Caco-2 (cell line): ENCODE measurements at regions of chr3 and their contacts with region 1.

Region 1: DNA sequence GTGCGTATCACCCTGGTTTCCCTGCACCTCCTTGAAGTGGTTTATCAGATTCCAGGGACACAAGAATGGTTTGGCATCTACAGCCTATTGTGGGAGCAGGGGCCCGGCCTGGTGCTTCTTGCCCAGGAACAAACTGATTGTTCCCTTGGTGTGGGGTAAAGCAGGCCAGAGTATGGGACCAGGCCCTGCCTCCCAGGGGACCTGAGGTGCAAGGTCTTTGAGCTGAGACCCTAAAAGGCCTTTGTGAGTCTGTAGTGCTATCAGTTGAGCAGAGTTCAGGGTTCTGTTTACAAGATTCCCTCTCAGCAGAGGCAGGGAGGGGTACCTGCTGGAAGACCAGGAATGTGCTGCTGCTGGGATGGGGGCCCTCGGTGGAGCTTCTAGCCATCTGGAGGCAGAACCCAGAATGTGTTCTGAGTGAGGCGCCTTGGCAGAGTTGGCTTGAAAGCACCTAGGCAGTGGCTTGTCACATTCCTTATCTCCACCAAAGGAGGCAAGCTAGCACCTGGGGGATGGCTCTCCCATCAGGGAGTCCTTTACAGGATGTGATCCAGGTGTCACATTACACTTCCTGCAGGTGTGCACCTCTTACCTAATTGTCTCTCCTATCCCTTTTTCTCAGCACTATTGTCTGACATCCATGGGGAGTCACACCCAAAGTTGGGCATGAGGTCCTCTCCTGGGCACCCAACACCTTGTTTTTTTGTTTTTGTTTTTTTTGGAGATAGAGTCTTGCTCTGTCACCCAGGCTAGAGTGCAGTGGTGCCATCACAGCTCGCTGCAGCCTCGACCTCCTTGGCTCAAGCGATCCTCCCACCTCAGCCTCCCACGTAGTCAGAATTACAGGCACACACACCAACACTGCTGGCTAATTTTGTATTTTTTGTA is 13.1 kb downstream of the FLNB start:
- DNase-seq: peak; percentile 56 to 71
- H3K4me3 ChIP-seq: no peak overlapping the region
- H3K4me3 Mint-ChIP-seq: no peak overlapping the region
- H3K27ac Mint-ChIP-seq: peak overlapping the region; percentile 79
- H3K4me1 ChIP-seq: peaks cover 64% of the 10 kb centered on the region
- H3K4me1 Mint-ChIP-seq: peaks cover 43% of the 10 kb centered on the region
- H3K27me3 ChIP-seq: no peaks in the 10 kb centered on the region
- H3K27me3 Mint-ChIP-seq: no peaks in the 10 kb centered on the region
- CTCF ChIP-seq: no peak

Region 2: DNA sequence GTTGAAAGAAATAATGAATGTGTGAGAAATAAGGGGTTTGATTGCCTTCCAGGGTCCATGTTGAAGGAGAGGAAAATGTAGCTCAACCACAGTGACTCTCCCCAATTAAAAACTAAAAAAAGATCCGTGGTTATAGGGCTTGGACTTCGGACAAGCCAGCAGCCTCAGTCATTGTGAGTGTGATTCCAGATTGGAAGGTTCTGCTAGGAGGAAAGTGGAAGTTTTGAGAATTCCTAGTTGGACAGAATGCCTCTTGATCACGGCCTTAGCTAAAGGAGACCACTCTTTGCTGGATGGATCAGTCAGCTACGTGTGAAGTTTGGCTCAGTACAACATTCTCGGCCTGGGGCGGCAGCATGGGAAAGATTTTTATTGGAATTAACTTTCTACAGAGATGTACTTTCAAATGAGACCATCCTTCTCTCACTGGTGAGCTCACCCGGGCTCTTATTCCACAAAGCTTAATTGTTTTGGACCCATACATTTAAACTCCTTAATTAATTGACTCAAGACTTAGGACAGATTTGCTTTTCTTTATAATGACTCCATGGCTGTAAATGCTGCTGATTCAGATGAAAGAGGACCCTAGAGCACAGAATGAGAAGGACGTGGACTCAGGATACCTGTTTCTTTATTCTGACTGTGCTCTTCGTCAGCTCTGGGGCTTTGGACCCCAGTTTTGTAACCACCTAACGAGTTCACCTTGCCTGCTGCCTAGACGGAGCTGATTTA is 14.4 kb after region 1 on chr3:
- CTCF ChIA-PET with region 1: interaction called, 3 read pairs
- POLR2A ChIA-PET with region 1: no interaction called
- intact Hi-C with region 1: loop called (anchors 2 kb)
- DNase-seq: no peak
- H3K4me3 ChIP-seq: no peak overlapping the region
- H3K4me3 Mint-ChIP-seq: peak overlapping the region; percentile 6
- H3K27ac Mint-ChIP-seq: peak overlapping the region; percentile 49
- H3K4me1 ChIP-seq: peaks cover 70% of the 10 kb centered on the region
- H3K4me1 Mint-ChIP-seq: peaks cover 26% of the 10 kb centered on the region
- H3K27me3 ChIP-seq: no peaks in the 10 kb centered on the region
- H3K27me3 Mint-ChIP-seq: no peaks in the 10 kb centered on the region
- CTCF ChIP-seq: no peak

Region 3: DNA sequence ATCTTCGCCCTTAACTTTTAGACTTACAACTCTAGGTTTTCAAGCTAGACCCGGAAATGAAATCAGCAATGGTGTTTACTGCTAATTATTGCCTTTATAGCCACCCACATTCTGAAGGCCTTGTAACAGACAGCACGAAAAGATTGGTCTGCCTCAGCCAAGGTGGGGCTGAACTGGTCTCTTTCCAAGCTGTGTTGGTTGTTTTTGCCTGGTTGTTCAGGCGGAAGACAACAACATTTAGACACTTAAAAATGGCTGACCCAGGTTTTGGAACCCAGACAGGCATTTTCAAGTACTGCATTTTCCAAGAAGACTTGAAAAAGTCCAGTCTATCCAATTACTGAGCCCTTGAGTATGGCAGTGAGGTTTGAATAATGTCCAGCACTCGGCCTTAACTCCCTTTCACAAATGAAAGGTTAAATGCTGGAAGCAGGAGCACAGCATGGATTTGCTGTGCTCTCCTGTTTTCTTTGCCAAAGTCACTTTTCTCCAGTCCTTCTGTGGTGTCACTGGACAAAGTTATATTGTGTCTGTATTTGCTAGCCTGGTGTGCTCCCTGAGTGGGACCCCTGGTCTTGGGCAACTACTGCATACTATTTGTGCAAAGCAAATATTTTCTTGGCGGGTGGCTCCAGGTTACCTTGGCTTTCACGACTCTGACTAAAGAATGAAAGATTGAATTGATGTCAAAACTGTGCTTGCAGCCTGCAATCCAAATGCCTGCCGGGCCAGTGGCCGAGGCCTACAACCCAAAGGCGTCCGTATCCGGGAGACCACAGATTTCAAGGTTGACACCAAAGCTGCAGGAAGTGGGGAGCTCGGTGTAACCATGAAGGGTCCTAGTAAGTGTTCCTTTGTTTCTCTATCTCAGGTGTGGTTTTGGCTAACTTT is 80.4 kb after region 1 on chr3:
- CTCF ChIA-PET with region 1: no interaction called
- POLR2A ChIA-PET with region 1: no interaction called
- intact Hi-C with region 1: loop called (anchors 5 kb)
- DNase-seq: peak in 1 of 2 experiments; percentile 63
- H3K4me3 ChIP-seq: no peak overlapping the region
- H3K4me3 Mint-ChIP-seq: peak overlapping the region; percentile 15
- H3K27ac Mint-ChIP-seq: peak overlapping the region; percentile 74
- H3K4me1 ChIP-seq: peaks cover 21% of the 10 kb centered on the region; the same call in 1 of the 2 replicates
- H3K4me1 Mint-ChIP-seq: peaks cover 21% of the 10 kb centered on the region
- H3K27me3 ChIP-seq: no peaks in the 10 kb centered on the region
- H3K27me3 Mint-ChIP-seq: no peaks in the 10 kb centered on the region
- CTCF ChIP-seq: no peak